ENCODE measurements at regions of chr12 and their contacts with region 1.

Region 1: GRCh38 chr12:48903982-48904411 is 21.3 kb downstream of the FKBP11 start:
- DNase-seq: peak; percentile 85
- H3K4me3 ChIP-seq: peak overlapping the region; percentile 53 to 84
- H3K27ac ChIP-seq: no peak overlapping the region
- H3K4me1 ChIP-seq: peaks cover 0 to 5% of the 10 kb centered on the region in 2 experiments; a peak in 1 of 4 replicates
- H3K27me3 ChIP-seq: no peaks in the 10 kb centered on the region
- CTCF ChIP-seq: peak; percentile 68
- EP300 ChIP-seq: no peak
- RAD21 ChIP-seq: peak; percentile 23; the same call in 1 of the 2 replicates

Region 2: GRCh38 chr12:48857278-48857994 is 46.6 kb before region 1 on chr12:
- CTCF ChIA-PET with region 1: interaction called, 16 read pairs
- POLR2A ChIA-PET with region 1: interaction called, 4 read pairs
- DNase-seq: no peak
- H3K4me3 ChIP-seq: no peak overlapping the region
- H3K27ac ChIP-seq: no peak overlapping the region
- H3K4me1 ChIP-seq: peaks cover 0 to 6% of the 10 kb centered on the region in 2 experiments; a peak in 2 of 4 replicates
- H3K27me3 ChIP-seq: no peaks in the 10 kb centered on the region; the same call in 1 of the 2 replicates
- CTCF ChIP-seq: no peak
- EP300 ChIP-seq: no peak
- RAD21 ChIP-seq: no peak

Region 3: GRCh38 chr12:48865434-48866290 is 38.3 kb before region 1 on chr12 and contains the start of gene RND1:
- CTCF ChIA-PET with region 1: interaction called, 30 read pairs
- POLR2A ChIA-PET with region 1: no interaction called
- DNase-seq: peak; percentile 94
- H3K4me3 ChIP-seq: peak within 1 kb of the TSS; percentile 62 to 92
- H3K27ac ChIP-seq: no peak within 1 kb of the TSS; a peak in 1 of 4 replicates
- H3K4me1 ChIP-seq: peaks cover 0 to 9% of the 10 kb centered on the region in 2 experiments; a peak in 1 of 4 replicates
- H3K27me3 ChIP-seq: peaks cover 16% of the 10 kb centered on the region
- CTCF ChIP-seq: 0 out of 2 replicates have a peak, but pooled peaks have one; percentile 18
- EP300 ChIP-seq: no peak
- RAD21 ChIP-seq: no peak
- polyA plus RNA-seq, gene RND1: 0.19 and 0.39 TPM in 2 replicates

Region 4: DNA sequence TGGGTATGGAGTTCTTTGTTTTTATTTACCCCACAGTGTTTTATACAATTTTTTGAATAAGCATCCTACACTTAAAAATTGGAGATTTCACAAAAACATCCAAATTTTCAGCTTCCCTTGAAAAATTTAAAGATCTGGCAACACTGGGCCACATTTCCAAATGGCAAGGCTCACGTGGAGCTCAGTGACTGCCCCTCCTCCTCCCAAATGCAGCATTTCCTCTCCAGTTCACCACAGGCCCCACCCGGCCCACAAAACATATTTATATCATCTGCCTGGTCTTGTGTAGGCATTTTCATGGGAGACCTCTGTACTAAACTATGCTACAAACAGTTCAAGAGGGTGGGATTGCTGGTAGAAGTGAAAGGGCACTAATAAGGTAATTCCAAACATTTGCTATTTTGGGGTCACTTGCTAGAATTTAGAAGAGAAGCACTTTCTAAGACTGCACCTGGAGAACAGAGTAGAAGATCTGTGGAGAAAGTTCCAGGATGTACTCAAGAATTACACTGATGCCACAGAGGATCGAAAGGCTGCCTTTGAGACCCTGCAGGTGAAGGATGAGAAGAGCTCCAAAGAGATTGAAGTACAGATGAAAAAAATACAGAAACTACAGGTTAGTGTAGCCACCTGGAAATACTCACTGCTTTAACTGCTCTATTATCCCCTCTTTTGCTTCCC is 14.0 kb after region 1 on chr12:
- CTCF ChIA-PET with region 1: interaction called, 20 read pairs
- POLR2A ChIA-PET with region 1: interaction called, 3 read pairs
- DNase-seq: no peak
- H3K4me3 ChIP-seq: no peak overlapping the region
- H3K27ac ChIP-seq: no peak overlapping the region
- H3K4me1 ChIP-seq: no peaks in the 10 kb centered on the region; a peak in 1 of 4 replicates
- H3K27me3 ChIP-seq: no peaks in the 10 kb centered on the region
- CTCF ChIP-seq: no peak
- EP300 ChIP-seq: no peak
- RAD21 ChIP-seq: no peak

Region 5: DNA sequence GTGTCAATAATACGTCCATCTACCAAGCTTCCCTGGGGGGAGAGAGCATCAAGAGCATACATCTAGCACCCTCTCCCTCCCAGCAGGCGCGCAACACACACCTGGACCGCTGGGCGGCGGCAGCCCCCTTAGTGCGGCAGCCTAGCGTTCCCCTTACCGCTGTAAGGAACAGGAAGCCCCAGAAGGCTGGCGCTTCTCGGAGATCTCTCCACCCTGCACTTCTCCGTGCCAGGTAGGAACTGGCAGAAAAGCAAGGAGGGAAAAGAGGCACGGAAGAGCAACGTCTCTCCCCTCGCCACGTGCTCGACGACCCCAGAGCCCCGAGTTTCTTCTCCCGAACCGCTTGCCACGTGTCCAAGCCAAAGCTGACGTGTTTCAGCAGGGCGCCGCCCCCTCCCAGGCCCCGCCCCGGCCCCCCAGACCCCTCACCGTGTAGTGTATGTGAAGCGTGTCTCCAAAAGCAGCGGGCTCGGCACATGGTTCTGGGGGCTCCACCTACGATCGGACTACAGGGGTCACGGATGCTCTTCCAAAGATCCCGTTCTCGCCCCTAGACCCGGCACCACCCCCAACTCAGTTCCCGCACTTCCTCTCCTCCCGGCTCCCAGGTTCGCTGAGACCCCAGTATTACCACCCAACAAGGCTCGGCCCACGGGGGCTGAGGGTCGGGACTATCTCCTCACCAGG is 20.8 kb after region 1 on chr12:
- CTCF ChIA-PET with region 1: interaction called, 22 read pairs
- POLR2A ChIA-PET with region 1: no interaction called
- DNase-seq: peak; percentile 77
- H3K4me3 ChIP-seq: peak overlapping the region; percentile 52 to 57; a peak in 3 of 4 replicates
- H3K27ac ChIP-seq: no peak overlapping the region
- H3K4me1 ChIP-seq: no peaks in the 10 kb centered on the region; a peak in 1 of 4 replicates
- H3K27me3 ChIP-seq: no peaks in the 10 kb centered on the region
- CTCF ChIP-seq: peak; percentile 36
- EP300 ChIP-seq: no peak
- RAD21 ChIP-seq: peak; percentile 44

Region 6: GRCh38 chr12:49296034-49296835 is 392.2 kb after region 1 on chr12:
- CTCF ChIA-PET with region 1: no interaction called
- POLR2A ChIA-PET with region 1: no interaction called
- DNase-seq: peak; percentile 39
- H3K4me3 ChIP-seq: no peak overlapping the region; a peak in 1 of 4 replicates
- H3K27ac ChIP-seq: no peak overlapping the region
- H3K4me1 ChIP-seq: peaks cover 7 to 29% of the 10 kb centered on the region in 2 experiments; a peak in 3 of 4 replicates
- H3K27me3 ChIP-seq: no peaks in the 10 kb centered on the region
- CTCF ChIP-seq: no peak
- EP300 ChIP-seq: no peak
- RAD21 ChIP-seq: no peak